ENCODE measurements at regions of chr10 and their contacts with region 1.

Region 1: GRCh38 chr10:97714048-97714371 is 480 bp downstream of the MARVELD1 start:
- DNase-seq: peak; percentile 68
- ATAC-seq: peak; percentile 83
- H3K4me3 Mint-ChIP-seq: peak overlapping the region; percentile 81
- H3K27ac Mint-ChIP-seq: peak overlapping the region; percentile 78
- H3K4me1 Mint-ChIP-seq: peaks cover 11% of the 10 kb centered on the region
- H3K27me3 Mint-ChIP-seq: peaks cover 45% of the 10 kb centered on the region

Region 2: GRCh38 chr10:97736902-97737769 is 23.1 kb after region 1 on chr10 and contains the start of gene ZFYVE27:
- CTCF ChIA-PET with region 1: interaction called, 355 read pairs
- DNase-seq: peak; percentile 97
- ATAC-seq: peak; percentile 89
- H3K4me3 Mint-ChIP-seq: peak within 1 kb of the TSS; percentile 86
- H3K27ac Mint-ChIP-seq: peak within 1 kb of the TSS; percentile 89
- H3K4me1 Mint-ChIP-seq: peaks cover 36% of the 10 kb centered on the region
- H3K27me3 Mint-ChIP-seq: peaks cover 4% of the 10 kb centered on the region
- total RNA-seq, gene ZFYVE27: 31.4 to 32.8 TPM